HepG2 (cell line): ENCODE measurements at regions of chr2 and their contacts with region 1.

Region 1: DNA sequence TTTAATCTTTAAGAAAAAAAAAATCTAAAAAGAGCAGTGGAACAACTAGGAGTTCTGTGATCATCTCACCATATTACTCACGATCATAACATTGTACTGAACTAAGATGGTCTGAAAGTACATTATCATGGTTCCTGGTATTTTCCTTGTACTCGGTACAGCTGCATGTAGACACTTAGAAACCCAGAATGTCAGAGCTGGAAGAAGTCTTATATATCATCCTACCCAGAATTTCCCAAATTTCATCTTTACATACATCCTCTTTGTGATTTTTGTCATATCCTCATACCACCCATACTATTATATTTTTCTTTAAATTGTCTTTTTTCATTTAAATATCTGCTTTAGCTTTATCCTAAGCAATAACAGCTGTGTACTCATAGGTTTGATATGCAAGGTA is 12.4 kb upstream of the ST3GAL5 start:
- DNase-seq: no peak
- ATAC-seq: no peak
- H3K4me3 ChIP-seq: no peak overlapping the region
- H3K27ac ChIP-seq: no peak overlapping the region
- H3K4me1 ChIP-seq: peaks cover 16% of the 10 kb centered on the region
- H3K27me3 ChIP-seq: no peaks in the 10 kb centered on the region; a peak in 1 of 5 replicates
- CTCF ChIP-seq: no peak
- EP300 ChIP-seq: no peak
- POLR2A ChIP-seq: no peak
- RAD21 ChIP-seq: no peak

Region 2: GRCh38 chr2:84443477-84443876 is 1457.7 kb before region 1 on chr2:
- CTCF ChIA-PET with region 1: no interaction called
- POLR2A ChIA-PET with region 1: no interaction called
- in situ Hi-C with region 1: no loop called
- intact Hi-C with region 1: no loop called
- DNase-seq: no peak
- ATAC-seq: no peak
- H3K4me3 ChIP-seq: no peak overlapping the region
- H3K27ac ChIP-seq: no peak overlapping the region
- H3K4me1 ChIP-seq: no peaks in the 10 kb centered on the region
- H3K27me3 ChIP-seq: no peaks in the 10 kb centered on the region
- CTCF ChIP-seq: no peak
- EP300 ChIP-seq: no peak
- POLR2A ChIP-seq: no peak
- RAD21 ChIP-seq: no peak

Region 3: DNA sequence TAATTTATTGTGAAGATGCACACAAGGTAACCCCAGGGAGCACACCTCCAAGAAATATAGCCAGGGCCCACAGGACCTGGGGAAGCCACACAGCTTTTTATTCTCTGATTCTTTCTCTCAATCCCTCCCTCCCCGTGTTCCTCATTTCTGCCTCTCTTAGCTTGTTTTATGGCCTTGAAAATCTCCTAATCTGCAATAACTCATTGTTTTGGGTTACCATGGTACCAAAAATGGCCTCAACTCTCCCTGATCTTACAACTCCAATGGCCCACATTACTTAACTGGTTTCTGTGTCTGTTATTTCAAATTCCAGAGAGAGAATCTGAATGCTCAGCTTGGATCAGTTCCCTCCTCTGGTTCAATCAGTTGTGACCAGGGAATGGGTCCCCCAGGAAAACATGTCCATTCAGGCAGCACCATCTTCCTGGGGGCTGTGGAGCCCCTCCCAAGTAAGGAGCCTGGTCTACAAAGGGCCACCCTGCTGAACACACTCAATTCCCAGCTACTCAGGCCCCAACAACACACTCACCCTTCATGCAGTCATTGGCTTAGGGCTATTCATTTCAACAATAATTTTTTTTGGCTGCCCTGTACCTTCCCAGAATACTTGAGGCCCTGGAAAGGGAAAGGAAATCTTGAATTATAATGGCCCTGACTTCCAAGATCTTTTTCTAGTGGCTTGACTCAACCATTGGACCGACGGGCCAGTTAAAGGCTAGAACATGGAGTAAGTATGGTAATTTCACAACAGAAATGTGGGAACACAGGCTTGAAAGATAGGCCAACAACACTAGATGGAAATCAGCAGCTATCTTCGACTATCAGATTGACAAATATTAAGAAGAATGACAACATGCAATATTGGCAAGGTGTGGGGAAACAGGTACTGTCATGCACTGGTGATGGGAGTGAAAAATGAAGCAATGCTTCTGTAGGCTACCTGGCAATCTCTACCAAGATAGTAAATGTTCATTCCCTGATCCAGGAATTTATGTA is 29.3 kb after region 1 on chr2:
- CTCF ChIA-PET with region 1: no interaction called
- POLR2A ChIA-PET with region 1: no interaction called
- in situ Hi-C with region 1: no loop called
- intact Hi-C with region 1: loop called (anchors 1 kb)
- DNase-seq: no peak
- ATAC-seq: no peak
- H3K4me3 ChIP-seq: no peak overlapping the region
- H3K27ac ChIP-seq: no peak overlapping the region
- H3K4me1 ChIP-seq: 0 out of 2 replicates have a peak, but pooled peaks cover 5% of the 10 kb centered on the region
- H3K27me3 ChIP-seq: no peaks in the 10 kb centered on the region; a peak in 1 of 5 replicates
- CTCF ChIP-seq: no peak
- EP300 ChIP-seq: no peak
- POLR2A ChIP-seq: no peak
- RAD21 ChIP-seq: no peak